Posterior cingulate gyrus (tissue), 11 donors: ENCODE measurements at regions of chr6 and their contacts with region 1.

Region 1: DNA sequence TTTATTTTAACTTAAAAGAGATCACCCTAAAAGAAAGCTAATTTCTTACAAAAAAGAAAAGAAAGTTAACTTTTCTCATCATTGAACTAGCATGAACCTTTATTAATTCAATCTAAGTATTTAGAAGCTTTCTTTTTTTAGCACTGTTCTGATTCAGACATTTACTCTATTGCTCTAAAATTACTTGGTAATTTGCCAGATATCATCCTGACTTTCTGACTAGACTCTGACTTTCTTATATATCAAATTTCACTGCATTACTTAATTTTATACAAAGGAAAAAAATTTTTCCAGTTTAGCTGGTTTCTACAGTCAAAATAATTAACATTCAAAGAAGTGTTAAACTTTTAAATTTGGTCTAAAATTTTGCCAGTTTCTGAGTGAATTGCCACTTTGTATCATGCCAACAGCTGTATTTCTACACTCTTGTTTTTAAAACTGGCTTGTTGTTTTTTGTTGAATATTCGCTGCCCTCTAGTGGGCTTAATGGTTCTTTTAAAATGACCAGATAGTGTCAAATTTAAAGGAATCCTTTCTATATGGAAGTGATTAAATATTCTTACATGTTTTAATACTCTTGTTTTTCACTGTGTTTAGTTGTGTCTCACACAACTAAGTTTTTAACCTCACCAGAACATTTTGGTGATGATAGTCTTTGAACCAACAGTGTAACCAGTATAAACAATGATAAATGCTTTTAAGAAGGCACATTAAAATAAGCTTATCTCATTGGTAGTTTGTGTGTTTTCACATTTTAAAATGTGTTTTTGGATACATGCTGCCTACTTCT is 102.0 kb downstream of the POPDC3 start:
- DNase-seq: no peak

Region 2: DNA sequence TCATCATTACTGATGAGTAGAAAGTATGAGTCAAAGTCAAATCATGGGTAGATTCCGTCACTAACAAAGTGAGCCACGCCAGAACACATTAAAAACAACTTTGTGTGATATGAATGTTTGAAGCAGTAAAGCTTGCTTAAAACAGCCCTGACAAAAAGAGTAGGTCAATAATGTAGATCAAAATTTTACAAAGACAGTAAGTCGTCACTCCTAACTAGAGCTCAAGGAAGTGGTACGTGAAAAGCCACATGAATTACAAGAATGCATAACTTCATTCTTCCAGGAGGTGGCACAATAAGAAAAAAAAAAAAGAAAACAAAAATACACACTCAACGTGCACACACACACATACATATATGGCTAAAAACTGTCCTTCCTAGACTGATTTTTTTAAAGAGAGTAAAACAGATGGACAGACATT is 288.0 kb before region 1 on chr6:
- intact Hi-C with region 1: loop called (anchors 2 kb)
- DNase-seq: no peak

Region 3: DNA sequence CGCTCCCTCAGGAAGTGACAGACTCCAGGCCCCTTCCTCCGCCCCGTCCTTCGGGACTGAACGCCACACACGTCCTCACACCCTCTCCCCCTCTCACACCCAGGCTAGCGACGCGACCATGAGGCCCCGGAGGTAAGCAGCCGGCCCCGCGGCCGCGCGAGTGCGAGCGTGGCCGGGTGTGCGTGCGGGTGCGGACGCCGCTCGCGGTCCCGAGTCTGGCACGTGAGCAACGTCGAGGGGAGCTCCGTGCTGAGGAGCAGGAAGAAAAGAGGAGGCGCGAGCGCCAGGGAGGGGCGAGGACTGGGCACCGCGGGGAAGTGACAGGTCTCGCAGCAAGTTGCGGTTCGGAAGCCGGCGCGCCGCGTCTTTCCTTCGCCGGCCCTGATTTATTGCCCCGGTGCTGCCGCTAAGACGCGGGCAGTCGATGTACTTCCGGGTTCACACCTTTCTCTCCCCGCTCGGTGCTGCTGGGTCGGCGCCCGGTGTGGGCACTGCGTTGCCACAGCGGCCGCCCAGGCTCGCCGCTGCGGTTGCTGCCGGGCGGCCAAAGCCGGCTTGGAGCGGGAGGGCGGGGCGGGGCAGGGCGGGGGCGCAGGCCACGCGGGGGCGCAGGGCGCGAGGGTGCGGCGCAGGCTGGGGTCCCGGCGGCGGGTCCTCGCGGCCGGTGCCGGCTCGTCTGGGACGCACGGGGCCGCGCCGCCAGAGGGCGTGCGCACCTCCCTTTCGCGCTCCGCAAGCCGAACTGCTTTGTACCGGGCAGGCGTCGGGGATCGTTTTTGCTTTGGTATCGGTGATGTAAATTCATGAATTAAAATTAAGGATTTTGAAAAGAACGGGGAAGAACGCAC is 136.7 kb before region 1 on chr6:
- intact Hi-C with region 1: loop called (anchors 5 kb)
- DNase-seq: peak in 9 of 10 donors; percentile 37 to 92 (median 51)